IMR-90 (cell line): ENCODE measurements at regions of chr4 and their contacts with region 1.

Region 1: DNA sequence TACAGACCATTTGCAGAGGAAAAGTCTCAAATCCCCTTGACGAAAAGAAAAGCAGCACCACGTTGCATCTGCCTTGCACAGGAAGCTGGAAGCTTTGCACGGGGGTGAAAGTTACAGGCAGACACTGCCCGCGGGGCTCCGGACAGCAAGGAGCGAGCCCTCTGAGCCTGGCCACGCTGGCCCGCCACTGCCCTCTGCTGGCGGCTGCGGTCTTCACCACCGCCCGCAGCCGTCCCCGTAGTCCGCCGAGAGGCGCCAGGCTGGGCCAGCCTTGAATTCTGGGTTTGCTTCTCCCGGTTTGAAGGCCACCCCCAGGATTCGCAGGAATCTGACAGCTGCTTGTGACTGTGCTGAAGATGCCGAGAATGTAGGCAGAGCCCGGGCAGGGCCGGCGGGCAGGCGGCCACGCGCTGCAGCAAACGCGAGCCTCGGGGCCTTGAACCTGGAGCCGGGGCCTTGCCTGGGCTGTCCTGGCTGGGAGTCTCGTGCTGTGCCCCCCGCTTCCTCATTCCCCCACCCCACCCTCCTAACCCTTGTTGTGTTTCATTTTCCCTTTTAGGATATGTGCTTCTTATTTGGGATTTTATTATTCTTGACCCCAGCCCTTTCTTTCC is 49.2 kb downstream of the ENPP6 start:
- DNase-seq: peak; percentile 47
- ATAC-seq: peak; percentile 95
- H3K4me3 ChIP-seq: no peak overlapping the region
- H3K27ac ChIP-seq: no peak overlapping the region
- H3K4me1 ChIP-seq: peaks cover 5% of the 10 kb centered on the region; the same call in 1 of the 2 replicates
- H3K27me3 ChIP-seq: peaks cover 4% of the 10 kb centered on the region; the same call in 1 of the 2 replicates
- CTCF ChIP-seq: peak; percentile 88
- POLR2A ChIP-seq: no peak
- RAD21 ChIP-seq: peak; percentile 85

Region 2: GRCh38 chr4:183471946-183472708 is 696.4 kb before region 1 on chr4:
- CTCF ChIA-PET with region 1: no interaction called
- POLR2A ChIA-PET with region 1: no interaction called
- dilution Hi-C with region 1: no loop called
- in situ Hi-C with region 1: no loop called
- intact Hi-C with region 1: loop called (anchors 10 kb)
- DNase-seq: peak; percentile 66
- ATAC-seq: peak; percentile 87
- H3K4me3 ChIP-seq: no peak overlapping the region
- H3K27ac ChIP-seq: no peak overlapping the region
- H3K4me1 ChIP-seq: peaks cover 2% of the 10 kb centered on the region
- H3K27me3 ChIP-seq: no peaks in the 10 kb centered on the region
- CTCF ChIP-seq: peak; percentile 85
- POLR2A ChIP-seq: no peak
- RAD21 ChIP-seq: peak; percentile 84

Region 3: GRCh38 chr4:183840311-183840710 is 328.2 kb before region 1 on chr4:
- CTCF ChIA-PET with region 1: interaction called, 9 read pairs
- POLR2A ChIA-PET with region 1: no interaction called
- dilution Hi-C with region 1: no loop called
- in situ Hi-C with region 1: loop called (anchors 5 kb)
- intact Hi-C with region 1: loop called (anchors 1 kb)
- DNase-seq: peak; percentile 78
- ATAC-seq: peak; percentile 86
- H3K4me3 ChIP-seq: no peak overlapping the region
- H3K27ac ChIP-seq: no peak overlapping the region
- H3K4me1 ChIP-seq: no peaks in the 10 kb centered on the region; the same call in 1 of the 2 replicates
- H3K27me3 ChIP-seq: peaks cover 2% of the 10 kb centered on the region; the same call in 1 of the 2 replicates
- CTCF ChIP-seq: peak; percentile 96
- POLR2A ChIP-seq: 0 out of 2 replicates have a peak, but pooled peaks have one; percentile 38
- RAD21 ChIP-seq: peak; percentile 98

Region 4: GRCh38 chr4:183987987-183988392 is 180.5 kb before region 1 on chr4:
- CTCF ChIA-PET with region 1: no interaction called
- POLR2A ChIA-PET with region 1: no interaction called
- dilution Hi-C with region 1: no loop called
- in situ Hi-C with region 1: no loop called
- intact Hi-C with region 1: loop called (anchors 5 kb)
- DNase-seq: peak; percentile 95
- ATAC-seq: peak; percentile 82
- H3K4me3 ChIP-seq: peak overlapping the region; percentile 34
- H3K27ac ChIP-seq: peak overlapping the region; percentile 92
- H3K4me1 ChIP-seq: peaks cover 18% of the 10 kb centered on the region
- H3K27me3 ChIP-seq: no peaks in the 10 kb centered on the region
- CTCF ChIP-seq: no peak
- POLR2A ChIP-seq: 0 out of 2 replicates have a peak, but pooled peaks have one; percentile 61
- RAD21 ChIP-seq: no peak

Region 5: DNA sequence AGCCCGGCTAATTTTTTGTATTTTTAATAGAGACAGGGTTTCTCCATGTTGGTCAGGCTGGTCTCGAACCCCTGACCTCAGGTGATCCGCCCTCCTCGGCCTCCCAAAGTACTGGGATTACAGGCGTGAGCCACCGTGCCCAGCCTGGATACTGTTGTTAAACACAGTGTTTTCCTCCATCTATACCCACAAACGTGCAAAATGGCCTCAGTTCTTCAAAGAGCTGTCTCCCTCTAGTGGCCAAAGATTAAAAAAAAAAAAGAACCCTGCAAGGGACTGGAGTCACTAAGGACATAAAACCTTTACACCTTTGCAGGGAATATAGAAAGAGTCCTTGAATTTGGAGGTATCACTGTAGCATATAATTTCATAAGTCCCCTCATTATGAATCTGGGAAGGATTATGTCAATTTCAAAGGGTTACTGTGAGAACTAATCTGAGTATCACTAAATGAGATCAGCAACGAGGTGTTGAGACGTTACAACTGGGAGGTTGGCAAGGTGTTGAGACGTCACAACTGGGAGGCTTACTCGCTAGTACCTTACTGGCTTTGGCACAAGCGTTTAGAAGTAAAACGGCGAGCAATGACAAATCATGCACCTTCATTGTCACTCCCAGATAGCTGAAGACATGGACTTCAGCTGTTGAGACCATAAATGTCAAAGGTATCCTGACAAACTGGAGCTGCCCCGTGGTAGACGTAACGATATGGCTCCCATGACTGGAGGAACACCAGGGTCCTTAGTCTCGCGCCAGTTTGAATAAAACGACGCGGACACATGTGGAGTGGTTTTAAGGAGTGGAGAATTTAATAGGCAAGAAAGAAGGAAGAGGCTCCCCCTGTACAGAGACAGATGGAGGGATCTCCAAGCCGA is 82.5 kb after region 1 on chr4:
- CTCF ChIA-PET with region 1: interaction called, 4 read pairs
- POLR2A ChIA-PET with region 1: no interaction called
- dilution Hi-C with region 1: no loop called
- in situ Hi-C with region 1: no loop called
- intact Hi-C with region 1: loop called (anchors 2 kb)
- DNase-seq: peak; percentile 60
- ATAC-seq: peak; percentile 79
- H3K4me3 ChIP-seq: no peak overlapping the region
- H3K27ac ChIP-seq: no peak overlapping the region
- H3K4me1 ChIP-seq: no peaks in the 10 kb centered on the region
- H3K27me3 ChIP-seq: no peaks in the 10 kb centered on the region
- CTCF ChIP-seq: peak; percentile 62
- POLR2A ChIP-seq: no peak
- RAD21 ChIP-seq: peak; percentile 49